ENCODE measurements at regions of chr19 and their contacts with region 1.

Region 1: GRCh38 chr19:3984908-3985642 is at the start of gene EEF2:
- DNase-seq: peak; percentile 79
- H3K4me3 ChIP-seq: peak within 1 kb of the TSS; percentile 77 to 95 (median 82)
- H3K27ac ChIP-seq: peak within 1 kb of the TSS; percentile 85
- H3K4me1 ChIP-seq: peaks cover 55% of the 10 kb centered on the region
- H3K27me3 ChIP-seq: no peaks in the 10 kb centered on the region
- CTCF ChIP-seq: no peak
- total RNA-seq, gene EEF2: 2,299 to 2,969 TPM

Region 2: DNA sequence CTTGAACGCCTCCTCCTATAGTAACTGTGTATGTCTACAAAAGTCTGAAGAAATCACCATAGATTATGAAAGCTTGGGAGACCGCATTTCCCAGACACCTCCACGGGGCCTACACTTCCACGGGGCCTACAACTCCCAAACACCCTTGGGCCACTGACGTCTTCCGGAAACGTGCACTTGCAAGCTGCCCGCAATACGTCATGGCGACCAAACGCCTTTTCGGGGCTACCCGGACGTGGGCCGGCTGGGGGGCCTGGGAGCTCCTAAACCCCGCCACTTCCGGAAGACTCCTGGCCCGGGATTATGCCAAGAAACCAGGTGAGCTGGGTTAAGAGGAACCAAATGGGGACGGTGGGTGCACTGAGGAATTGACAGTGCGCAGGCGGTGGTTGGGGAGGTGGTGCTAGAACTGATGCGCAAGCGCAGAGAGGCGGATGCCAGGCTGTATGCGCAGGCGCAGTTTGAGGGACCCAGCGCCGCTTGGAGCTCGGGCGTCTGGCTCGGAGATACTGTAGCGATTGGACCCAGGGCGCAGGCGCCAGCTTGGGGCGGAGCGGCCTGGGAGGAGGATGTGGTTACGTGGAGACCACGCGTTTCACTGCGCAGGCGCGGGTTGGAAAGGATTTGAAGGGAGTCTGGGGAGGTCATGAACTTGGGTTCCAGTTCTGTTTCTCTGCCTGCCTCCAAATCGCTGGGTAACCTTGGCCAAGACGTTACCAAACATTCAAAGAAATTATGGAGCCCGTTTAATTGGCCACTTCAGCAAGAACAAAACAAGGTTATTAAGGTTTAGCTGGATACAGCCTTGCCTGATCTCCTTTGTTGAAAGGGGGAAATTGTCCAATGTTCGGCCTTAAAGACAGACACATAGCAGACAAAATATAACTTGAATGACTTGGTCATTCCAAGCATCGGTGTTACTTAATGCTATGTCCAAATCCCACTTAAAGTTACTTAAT is 222.3 kb before region 1 on chr19 and contains the start of gene MRPL54:
- CTCF ChIA-PET with region 1: no interaction called
- dilution Hi-C with region 1: no loop called
- in situ Hi-C with region 1: no loop called
- intact Hi-C with region 1: loop called (anchors 5 kb)
- DNase-seq: peak; percentile 98
- H3K4me3 ChIP-seq: peak within 1 kb of the TSS; percentile 73 to 100 (median 97)
- H3K27ac ChIP-seq: peak within 1 kb of the TSS; percentile 75
- H3K4me1 ChIP-seq: peaks cover 14% of the 10 kb centered on the region
- H3K27me3 ChIP-seq: no peaks in the 10 kb centered on the region
- CTCF ChIP-seq: no peak
- total RNA-seq, gene MRPL54: 23.7 to 48.2 TPM

Region 3: GRCh38 chr19:3945838-3946237 is 39.2 kb before region 1 on chr19:
- CTCF ChIA-PET with region 1: no interaction called
- dilution Hi-C with region 1: loop called (anchors 5 kb)
- in situ Hi-C with region 1: no loop called
- intact Hi-C with region 1: no loop called
- DNase-seq: no peak
- H3K4me3 ChIP-seq: no peak overlapping the region
- H3K27ac ChIP-seq: no peak overlapping the region
- H3K4me1 ChIP-seq: no peaks in the 10 kb centered on the region
- H3K27me3 ChIP-seq: no peaks in the 10 kb centered on the region
- CTCF ChIP-seq: no peak

Region 4: DNA sequence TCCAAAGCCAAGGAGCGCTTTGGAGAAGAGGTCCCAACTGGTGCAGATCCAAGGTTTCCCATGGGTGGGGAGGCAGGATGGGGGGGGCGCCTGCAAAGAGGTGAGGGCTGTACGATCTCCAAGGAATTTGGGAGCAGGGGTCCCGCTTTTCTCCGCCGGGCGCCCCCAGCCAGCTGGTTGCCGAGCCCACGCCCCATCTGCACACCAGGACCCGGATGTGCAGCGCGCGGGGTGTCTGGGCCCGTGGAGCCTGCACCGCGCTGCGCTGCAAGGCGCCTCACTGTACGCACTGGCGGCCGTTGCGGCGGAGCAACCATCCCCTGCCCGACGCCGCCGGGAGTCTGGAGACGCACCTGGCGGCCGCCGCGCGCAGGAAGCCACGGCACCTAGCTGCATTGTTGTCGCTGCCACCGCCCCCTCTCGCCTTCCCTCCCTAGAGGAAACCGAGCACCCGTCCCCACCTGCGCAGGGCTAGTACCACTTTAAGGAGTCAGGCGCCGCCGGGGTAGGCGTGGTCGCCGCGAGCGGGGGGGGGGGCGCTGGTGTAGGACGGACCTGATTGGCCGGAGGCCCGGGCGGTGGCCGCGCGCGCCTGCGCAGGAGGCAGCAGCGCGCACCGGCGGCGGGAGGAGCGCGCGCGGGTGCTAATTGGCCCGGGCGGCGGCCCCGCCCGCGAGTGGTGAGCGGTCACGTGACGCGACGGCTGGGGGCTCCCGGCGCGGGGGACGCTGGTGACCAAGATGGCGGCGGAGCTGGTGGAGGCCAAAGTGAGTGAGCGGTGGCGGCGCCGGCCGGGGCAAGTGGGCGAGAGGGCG is 22.2 kb after region 1 on chr19 and contains the start of gene PIAS4:
- CTCF ChIA-PET with region 1: no interaction called
- dilution Hi-C with region 1: no loop called
- in situ Hi-C with region 1: no loop called
- intact Hi-C with region 1: loop called (anchors 1 kb)
- DNase-seq: peak; percentile 90
- H3K4me3 ChIP-seq: peak within 1 kb of the TSS; percentile 89 to 99 (median 90)
- H3K27ac ChIP-seq: peak within 1 kb of the TSS; percentile 8
- H3K4me1 ChIP-seq: peaks cover 9% of the 10 kb centered on the region
- H3K27me3 ChIP-seq: no peaks in the 10 kb centered on the region
- CTCF ChIP-seq: peak in 1 of 2 donors; percentile 4
- total RNA-seq, gene PIAS4: 20.8 to 29.9 TPM

Region 5: GRCh38 chr19:4139614-4140236 is 154.7 kb after region 1 on chr19:
- CTCF ChIA-PET with region 1: interaction called, 41 read pairs
- dilution Hi-C with region 1: no loop called
- in situ Hi-C with region 1: no loop called
- intact Hi-C with region 1: no loop called
- DNase-seq: peak; percentile 54
- H3K4me3 ChIP-seq: no peak overlapping the region
- H3K27ac ChIP-seq: no peak overlapping the region
- H3K4me1 ChIP-seq: no peaks in the 10 kb centered on the region
- H3K27me3 ChIP-seq: no peaks in the 10 kb centered on the region
- CTCF ChIP-seq: peak; percentile 86 to 89

Region 6: DNA sequence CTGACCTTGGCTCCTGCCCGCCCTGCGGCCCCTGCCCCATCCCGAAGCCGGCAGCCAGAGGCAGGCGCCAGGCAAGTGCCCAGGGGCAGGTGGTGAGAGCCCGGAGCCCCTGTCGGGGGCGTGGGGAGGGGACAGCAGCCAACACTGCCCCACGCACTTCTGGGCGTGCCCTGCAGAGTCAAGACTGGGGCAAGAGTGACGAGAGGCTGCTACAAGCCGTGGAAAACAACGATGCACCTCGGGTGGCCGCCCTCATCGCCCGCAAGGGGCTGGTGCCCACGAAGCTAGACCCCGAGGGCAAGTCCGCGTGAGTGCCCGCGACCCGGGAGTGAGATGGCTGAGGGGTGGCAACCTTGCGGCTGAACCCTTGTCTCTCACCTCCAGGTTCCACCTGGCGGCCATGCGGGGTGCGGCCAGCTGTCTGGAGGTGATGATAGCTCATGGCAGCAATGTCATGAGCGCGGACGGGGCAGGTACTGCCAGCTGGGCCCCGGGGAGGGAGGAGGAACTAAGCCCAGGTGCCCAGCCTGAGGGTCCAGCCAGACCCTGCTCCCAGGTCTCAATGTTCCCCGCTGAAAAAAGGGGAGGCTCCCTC is 214.7 kb after region 1 on chr19:
- CTCF ChIA-PET with region 1: no interaction called
- dilution Hi-C with region 1: loop called (anchors 5 kb)
- in situ Hi-C with region 1: loop called in 1 of 2 experiments (anchors 10 kb)
- intact Hi-C with region 1: loop called (anchors 1 kb)
- DNase-seq: no peak
- H3K4me3 ChIP-seq: no peak overlapping the region
- H3K27ac ChIP-seq: no peak overlapping the region
- H3K4me1 ChIP-seq: no peaks in the 10 kb centered on the region
- H3K27me3 ChIP-seq: peaks cover 5% of the 10 kb centered on the region
- CTCF ChIP-seq: peak in 1 of 2 donors; percentile 38

Region 7: GRCh38 chr19:4327252-4327876 is 342.3 kb after region 1 on chr19:
- CTCF ChIA-PET with region 1: no interaction called
- dilution Hi-C with region 1: no loop called
- in situ Hi-C with region 1: no loop called
- intact Hi-C with region 1: no loop called
- DNase-seq: no peak
- H3K4me3 ChIP-seq: peak overlapping the region in 1 of 3 experiments; percentile 17
- H3K27ac ChIP-seq: no peak overlapping the region
- H3K4me1 ChIP-seq: peaks cover 3% of the 10 kb centered on the region
- H3K27me3 ChIP-seq: no peaks in the 10 kb centered on the region
- CTCF ChIP-seq: no peak

Region 8: DNA sequence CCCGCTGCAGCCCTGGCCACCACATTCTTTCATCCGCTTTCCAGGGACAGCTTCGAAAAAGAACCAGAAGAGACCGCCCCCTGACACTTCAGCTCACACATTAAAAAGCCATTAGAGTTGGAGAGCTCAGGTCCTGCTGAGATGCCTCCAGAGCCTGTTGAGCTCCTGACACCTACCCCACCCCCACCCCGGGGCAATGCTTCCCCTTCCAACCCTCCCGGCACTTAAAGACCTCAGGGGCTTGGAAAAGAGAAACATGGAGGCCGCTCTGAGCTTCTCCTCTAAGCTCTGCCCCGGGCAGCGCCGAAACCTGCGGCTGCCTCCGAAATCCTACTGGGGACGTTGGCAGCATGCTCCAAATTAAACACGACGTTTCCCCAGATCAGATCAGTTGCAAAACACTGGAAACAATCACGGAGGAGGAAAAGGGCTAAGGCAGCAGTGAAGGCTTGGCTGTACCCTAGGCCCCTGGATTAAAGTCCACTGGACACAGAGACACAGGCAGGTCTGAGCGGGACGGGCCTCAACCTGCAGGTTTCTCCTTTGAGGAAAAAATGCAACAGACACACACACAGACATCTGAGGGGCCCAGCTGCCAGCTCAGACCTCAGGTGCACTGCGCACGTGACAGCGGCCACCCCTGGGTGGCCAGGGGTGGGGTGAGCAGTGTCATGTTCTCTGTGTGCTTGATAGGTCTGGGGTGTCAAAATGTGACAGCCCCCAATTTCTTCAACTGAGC is 405.7 kb after region 1 on chr19:
- CTCF ChIA-PET with region 1: interaction called, 16 read pairs
- dilution Hi-C with region 1: no loop called
- in situ Hi-C with region 1: no loop called
- intact Hi-C with region 1: no loop called
- DNase-seq: peak; percentile 73
- H3K4me3 ChIP-seq: no peak overlapping the region
- H3K27ac ChIP-seq: peak overlapping the region; percentile 66
- H3K4me1 ChIP-seq: peaks cover 43% of the 10 kb centered on the region
- H3K27me3 ChIP-seq: no peaks in the 10 kb centered on the region
- CTCF ChIP-seq: no peak

Measured in mammary epithelial cell (primary cell).